Right ventricle myocardium superior (tissue), 1 donor: ENCODE measurements at regions of chr14 and their contacts with region 1.

Region 1: DNA sequence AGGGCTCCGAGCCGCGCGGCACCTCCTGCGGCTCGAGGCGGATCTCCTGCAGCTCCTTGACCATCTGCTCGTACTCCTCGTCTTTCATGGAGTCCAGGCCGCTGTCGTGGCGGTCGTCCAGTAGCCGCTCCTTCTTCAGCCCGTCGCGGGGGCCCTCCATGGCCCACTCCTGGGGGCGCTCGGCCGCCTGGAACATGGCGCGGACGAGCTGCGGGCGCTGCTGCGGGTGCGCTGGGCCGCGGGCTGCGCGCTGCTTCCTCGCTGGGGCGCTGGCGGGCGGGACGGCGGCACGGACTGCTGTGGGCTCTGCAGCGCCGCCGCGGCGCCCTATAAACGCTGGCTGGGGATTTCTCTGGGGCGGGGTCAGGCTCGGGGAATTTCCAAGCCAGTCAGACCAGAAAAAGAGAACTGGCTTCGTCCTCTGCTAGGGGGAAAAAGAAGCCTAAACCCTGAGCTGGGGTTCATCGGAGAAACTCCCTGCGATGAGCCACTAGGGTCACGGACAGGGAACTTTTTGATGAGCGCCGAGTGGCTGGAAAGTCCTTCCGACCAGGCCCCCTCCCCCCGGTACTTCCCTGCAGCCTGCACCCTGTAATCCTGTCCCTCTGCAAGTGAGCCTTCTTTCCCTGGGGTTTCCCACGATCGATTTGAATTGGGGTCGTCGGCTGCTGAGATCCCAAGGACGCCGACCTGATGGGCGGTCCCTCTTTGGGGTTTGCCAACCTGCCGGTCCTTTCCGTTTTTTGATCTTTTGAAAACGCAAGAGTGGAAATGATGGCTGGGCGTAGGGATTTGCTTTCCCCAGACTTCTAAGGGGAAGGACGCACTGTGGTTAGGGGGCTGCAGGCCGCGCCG is at the start of gene NFKBIA:
- DNase-seq: peak; percentile 96
- ATAC-seq: peak; percentile 76
- total RNA-seq, gene NFKBIA: 73.3 TPM

Region 2: DNA sequence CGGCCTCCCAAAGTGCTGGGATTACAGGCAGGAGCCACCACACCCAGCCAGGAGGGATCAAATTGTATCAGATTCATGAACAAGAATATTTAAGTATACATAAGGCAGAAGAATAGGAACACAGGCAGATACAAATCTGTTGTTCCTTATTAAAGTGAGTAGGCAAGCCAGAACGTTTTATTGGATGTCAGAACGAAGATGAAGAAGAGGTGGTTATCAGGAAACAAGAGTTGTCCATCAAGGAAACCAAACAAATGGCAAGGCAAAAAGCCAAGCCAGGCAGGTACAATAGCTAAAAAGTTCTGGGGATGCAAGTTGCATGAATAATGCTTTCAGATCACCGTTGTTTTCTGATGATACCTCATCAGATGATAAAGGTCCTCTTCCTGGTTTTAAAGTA is 498.4 kb before region 1 on chr14:
- intact Hi-C with region 1: no loop called
- DNase-seq: no peak
- ATAC-seq: no peak

Region 3: GRCh38 chr14:35215110-35215876 is 189.4 kb before region 1 on chr14:
- intact Hi-C with region 1: loop called (anchors 5 kb)
- DNase-seq: no peak
- ATAC-seq: no peak

Region 4: DNA sequence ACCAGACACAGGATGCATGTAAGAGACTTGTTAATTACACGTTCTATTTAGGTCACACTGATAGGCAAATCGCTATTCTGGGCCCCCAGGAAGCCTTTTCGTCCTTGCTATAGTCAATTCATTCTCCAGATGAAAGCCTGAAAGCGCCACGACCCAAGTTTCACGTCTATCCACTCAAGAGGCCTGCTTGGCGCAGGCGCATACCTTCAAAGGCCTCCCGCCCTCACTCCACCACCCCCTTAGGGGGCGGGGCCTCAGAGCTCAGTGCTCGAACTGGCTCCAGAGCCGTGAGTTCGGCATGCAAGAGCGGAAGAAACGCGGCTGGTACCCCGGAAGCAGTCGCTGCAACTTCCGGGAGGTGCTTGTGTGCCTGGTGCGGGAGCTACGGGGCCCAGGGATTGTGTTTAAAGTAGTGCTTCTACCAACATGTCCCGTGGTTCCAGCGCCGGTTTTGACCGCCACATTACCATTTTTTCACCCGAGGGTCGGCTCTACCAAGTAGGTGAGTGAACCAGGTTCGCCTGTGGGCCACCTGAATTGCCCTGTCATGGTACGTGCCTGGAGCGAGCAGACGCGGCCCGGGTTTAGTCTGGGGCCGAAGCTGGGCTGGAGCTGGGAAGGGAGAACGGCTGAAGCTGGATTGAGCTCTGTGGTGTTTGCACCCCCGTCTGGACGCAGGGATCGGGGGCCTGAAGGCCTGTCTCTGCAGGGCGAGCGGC is 112.5 kb before region 1 on chr14 and contains the start of gene PSMA6:
- intact Hi-C with region 1: loop called (anchors 2 kb)
- DNase-seq: peak; percentile 99
- ATAC-seq: peak; percentile 99
- total RNA-seq, gene PSMA6: 178 TPM

Region 5: DNA sequence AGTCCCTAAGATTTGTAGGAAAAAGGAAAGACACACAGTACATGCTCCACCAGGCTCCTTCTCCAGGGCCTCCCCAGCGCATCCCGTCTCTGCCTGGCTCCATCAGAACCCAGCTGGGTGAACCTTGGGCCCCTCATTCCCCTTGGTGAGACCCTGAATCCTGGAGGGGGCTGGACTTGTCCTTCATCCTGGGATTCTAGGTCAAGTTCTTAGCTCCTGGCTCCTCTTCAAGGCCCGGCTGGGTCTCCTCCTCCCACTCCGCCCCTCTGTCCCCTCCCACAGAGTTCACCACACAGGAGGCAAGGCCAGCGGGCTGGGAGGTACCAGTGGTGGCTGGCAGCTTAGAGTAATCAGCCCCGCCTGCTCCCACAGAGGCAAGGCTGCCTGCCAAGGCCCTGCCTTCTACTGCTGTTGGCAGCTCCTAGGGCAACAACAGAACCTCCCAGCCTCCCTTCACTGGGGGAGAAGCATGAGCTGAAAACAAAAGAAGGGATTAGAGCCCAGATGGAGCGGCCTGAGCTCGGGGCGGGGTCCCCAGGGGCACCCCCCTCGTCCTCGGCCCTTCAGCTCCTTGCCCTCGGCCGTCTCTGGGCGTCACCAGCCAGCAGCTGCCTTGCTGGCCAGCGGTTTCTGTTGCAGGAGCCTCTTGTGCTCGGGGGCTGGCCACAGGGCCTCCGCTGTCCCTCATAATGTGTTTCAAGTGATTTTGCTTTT is 63.1 kb before region 1 on chr14:
- intact Hi-C with region 1: loop called (anchors 2 kb)
- DNase-seq: peak; percentile 98
- ATAC-seq: peak; percentile 93

Region 6: DNA sequence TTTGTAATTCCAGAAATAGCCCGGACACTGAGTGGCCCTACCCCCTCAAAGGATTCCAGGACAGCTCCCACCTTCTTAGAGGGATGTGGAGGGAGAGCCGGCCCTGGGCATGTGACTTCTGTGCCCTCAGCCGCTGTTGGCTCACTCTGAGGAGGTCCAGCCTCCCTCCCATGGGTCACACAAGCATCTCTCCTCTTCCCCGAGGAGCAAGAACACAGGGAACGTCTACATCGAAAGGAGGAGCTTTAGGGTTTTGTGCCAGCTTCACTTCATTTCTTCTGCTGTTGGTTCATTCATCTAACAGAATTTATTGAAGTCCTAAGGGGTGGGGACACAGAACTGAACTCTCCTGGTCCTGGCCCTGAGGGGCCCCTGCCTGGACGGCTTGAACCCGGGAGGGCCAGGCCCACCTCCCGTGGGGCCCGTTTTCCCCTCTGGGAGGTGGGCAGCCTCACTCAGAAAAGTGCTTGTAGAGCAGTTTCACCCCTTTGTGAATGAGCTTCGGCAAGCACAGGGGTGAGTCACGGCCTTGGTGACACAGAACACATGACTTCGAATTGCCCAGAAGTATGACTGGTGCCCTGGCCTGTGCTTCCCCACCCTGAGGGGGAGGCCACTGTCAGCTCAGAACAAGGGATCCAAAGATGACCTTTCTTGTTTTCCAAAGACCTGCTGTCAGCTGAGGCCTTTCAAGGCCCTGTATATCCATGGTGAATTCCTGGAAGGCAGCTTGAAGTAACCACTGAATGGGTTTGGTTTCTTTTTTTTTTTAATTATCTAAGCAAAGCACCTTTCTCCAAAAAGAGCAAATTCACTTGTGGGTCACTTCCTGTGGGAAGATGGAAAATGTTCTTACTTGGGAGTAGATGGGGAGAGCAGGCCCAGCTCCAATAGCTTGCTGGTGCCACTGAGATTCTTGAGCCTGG is 39.3 kb before region 1 on chr14:
- intact Hi-C with region 1: no loop called
- DNase-seq: peak; percentile 65
- ATAC-seq: peak; percentile 64

Region 7: DNA sequence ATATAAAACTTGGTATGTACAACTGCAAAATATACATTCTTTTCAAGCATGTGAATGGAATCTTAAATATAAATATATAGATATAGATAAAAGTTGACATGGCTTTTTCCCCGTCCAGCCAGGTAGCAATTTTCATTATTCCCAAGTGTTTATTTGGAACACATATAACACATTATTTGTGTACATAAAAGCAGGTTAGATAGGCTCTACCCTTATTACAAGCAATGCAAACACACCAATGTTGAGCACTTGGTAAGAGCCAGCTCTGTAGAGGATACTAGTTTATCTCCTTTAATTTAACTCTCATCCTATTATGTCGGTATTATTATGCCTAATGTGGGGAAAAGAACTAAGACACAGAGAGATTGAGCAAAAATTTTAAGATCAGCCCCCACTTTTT is 122.3 kb after region 1 on chr14:
- intact Hi-C with region 1: no loop called
- DNase-seq: no peak
- ATAC-seq: no peak